Calu3 (cell line): ENCODE measurements at regions of chr22 and their contacts with region 1.

Region 1: GRCh38 chr22:26718905-26719304 is 61.5 kb downstream of the MIAT start:
- DNase-seq: no peak
- H3K4me3 Mint-ChIP-seq: no peak overlapping the region
- H3K27ac Mint-ChIP-seq: no peak overlapping the region
- H3K4me1 Mint-ChIP-seq: no peaks in the 10 kb centered on the region
- H3K27me3 Mint-ChIP-seq: no peaks in the 10 kb centered on the region
- CTCF ChIP-seq: no peak

Region 2: DNA sequence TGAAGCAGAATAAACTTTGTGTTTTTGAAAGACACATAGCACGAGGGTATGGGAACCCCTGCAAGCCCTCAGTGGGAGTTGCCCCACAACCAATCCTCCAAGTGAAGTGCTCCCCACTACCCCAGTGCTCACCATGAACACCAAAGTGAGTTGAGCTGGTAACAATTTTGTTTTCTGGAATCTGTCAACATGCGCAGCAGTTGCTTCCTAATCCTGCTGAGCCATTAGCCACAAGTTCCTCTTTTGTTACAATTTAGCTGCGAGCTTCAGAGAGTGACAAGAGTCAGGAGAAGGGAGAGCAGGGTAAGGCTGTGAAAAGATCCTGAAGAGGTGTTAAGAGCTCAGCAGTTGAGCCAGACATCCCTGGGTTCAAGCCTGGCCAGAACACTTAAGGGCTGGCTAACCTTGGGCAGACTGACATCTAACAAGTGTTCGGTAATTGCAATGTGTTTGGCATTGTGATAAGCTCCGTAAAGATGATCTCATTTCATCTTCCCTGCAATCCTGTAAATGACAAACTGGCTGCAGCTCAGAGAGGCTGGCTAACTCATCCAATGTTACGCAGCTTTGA is 314.0 kb before region 1 on chr22:
- CTCF ChIA-PET with region 1: no interaction called
- intact Hi-C with region 1: no loop called
- DNase-seq: no peak
- H3K4me3 Mint-ChIP-seq: no peak overlapping the region
- H3K27ac Mint-ChIP-seq: no peak overlapping the region
- H3K4me1 Mint-ChIP-seq: no peaks in the 10 kb centered on the region
- H3K27me3 Mint-ChIP-seq: peaks cover 60% of the 10 kb centered on the region
- CTCF ChIP-seq: no peak

Region 3: GRCh38 chr22:26416670-26417250 is 302.1 kb before region 1 on chr22:
- CTCF ChIA-PET with region 1: no interaction called
- intact Hi-C with region 1: no loop called
- DNase-seq: peak; percentile 17
- H3K4me3 Mint-ChIP-seq: no peak overlapping the region
- H3K27ac Mint-ChIP-seq: no peak overlapping the region
- H3K4me1 Mint-ChIP-seq: no peaks in the 10 kb centered on the region
- H3K27me3 Mint-ChIP-seq: peaks cover 68% of the 10 kb centered on the region
- CTCF ChIP-seq: no peak

Region 4: DNA sequence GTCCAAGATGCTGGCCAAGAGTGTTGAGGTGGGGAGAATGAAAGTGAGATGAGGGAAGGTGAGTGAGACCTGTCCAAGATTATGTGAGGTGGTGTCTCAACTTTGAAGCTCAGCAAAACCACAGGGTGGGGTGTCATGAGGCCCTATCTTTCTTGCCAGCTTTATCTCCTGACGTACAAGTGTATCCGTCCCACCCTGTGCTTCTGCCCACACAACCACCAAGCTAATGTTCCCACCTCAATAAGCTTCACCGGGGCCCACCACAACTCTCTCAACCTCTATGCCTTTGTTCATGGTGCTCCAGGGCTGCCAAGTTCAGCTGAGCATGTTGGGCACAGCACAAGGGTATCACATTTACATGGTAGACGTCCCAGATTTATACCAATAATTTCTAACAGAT is 121.9 kb before region 1 on chr22:
- CTCF ChIA-PET with region 1: no interaction called
- intact Hi-C with region 1: no loop called
- DNase-seq: no peak
- H3K4me3 Mint-ChIP-seq: no peak overlapping the region
- H3K27ac Mint-ChIP-seq: no peak overlapping the region
- H3K4me1 Mint-ChIP-seq: peaks cover 20% of the 10 kb centered on the region
- H3K27me3 Mint-ChIP-seq: peaks cover 57% of the 10 kb centered on the region
- CTCF ChIP-seq: no peak

Region 5: GRCh38 chr22:26689513-26690301 is 29.2 kb before region 1 on chr22:
- CTCF ChIA-PET with region 1: interaction called, 3 read pairs
- intact Hi-C with region 1: loop called (anchors 2 kb)
- DNase-seq: no peak
- H3K4me3 Mint-ChIP-seq: no peak overlapping the region
- H3K27ac Mint-ChIP-seq: no peak overlapping the region
- H3K4me1 Mint-ChIP-seq: no peaks in the 10 kb centered on the region
- H3K27me3 Mint-ChIP-seq: peaks cover 14% of the 10 kb centered on the region
- CTCF ChIP-seq: no peak